ENCODE measurements at regions of chr16 and their contacts with region 1.

Region 1: GRCh38 chr16:3129137-3130131 is 5.4 kb upstream of the ZNF213 start:
- DNase-seq: peak; percentile 65
- CTCF ChIP-seq: peak; percentile 88

Region 2: DNA sequence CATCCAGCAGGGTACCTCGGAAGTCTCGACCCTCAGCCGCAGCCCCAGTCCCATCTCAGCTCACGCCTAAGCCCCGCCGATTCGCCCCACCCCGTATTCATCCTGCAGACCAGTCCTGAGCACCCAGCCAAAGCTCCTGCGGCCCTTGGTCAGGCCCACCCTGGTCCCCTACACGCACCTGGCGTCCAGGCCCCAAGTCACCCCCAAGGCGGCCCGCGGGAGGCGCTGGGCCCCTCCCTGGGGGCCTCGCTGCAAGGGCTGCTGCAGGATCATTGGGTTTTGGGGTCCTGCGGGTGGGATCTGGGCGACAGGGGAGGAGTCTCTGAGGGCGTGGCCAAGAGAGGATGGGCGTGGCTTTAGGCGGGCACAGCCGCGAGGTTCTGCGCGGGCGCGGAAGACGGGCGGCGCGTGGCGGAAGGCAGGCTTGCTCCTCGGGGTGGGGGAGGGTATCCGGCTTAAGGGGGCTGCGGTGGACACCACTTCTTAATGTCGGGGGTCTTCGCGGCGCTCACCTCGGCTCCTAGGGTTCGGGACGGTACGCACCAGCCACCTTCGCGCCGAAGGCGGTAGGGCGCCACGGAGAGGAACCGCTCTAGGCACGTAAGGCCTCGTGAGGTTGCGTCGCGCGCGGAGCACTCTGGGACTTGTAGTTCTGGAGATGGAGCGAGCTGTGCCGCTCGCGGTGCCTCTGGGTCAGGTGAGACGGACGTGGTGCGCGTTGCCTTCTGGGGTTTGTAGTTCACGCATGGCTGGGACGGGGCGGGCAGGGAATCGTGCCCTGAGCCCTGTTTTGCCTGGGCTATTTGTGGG is 105.6 kb before region 1 on chr16 and contains the starts of genes HCFC1R1 and THOC6:
- CTCF ChIA-PET with region 1: interaction called, 177 read pairs
- POLR2A ChIA-PET with region 1: no interaction called
- DNase-seq: peak; percentile 92
- CTCF ChIP-seq: no peak

Region 3: GRCh38 chr16:3065069-3065741 is 64.2 kb before region 1 on chr16 and contains the start of gene IL32:
- CTCF ChIA-PET with region 1: interaction called, 119 read pairs
- POLR2A ChIA-PET with region 1: no interaction called
- DNase-seq: peak; percentile 72
- CTCF ChIP-seq: no peak

Region 4: GRCh38 chr16:3094289-3095027 is 35.0 kb before region 1 on chr16:
- CTCF ChIA-PET with region 1: interaction called, 246 read pairs
- POLR2A ChIA-PET with region 1: no interaction called
- DNase-seq: peak; percentile 74
- CTCF ChIP-seq: peak; percentile 56

Region 5: DNA sequence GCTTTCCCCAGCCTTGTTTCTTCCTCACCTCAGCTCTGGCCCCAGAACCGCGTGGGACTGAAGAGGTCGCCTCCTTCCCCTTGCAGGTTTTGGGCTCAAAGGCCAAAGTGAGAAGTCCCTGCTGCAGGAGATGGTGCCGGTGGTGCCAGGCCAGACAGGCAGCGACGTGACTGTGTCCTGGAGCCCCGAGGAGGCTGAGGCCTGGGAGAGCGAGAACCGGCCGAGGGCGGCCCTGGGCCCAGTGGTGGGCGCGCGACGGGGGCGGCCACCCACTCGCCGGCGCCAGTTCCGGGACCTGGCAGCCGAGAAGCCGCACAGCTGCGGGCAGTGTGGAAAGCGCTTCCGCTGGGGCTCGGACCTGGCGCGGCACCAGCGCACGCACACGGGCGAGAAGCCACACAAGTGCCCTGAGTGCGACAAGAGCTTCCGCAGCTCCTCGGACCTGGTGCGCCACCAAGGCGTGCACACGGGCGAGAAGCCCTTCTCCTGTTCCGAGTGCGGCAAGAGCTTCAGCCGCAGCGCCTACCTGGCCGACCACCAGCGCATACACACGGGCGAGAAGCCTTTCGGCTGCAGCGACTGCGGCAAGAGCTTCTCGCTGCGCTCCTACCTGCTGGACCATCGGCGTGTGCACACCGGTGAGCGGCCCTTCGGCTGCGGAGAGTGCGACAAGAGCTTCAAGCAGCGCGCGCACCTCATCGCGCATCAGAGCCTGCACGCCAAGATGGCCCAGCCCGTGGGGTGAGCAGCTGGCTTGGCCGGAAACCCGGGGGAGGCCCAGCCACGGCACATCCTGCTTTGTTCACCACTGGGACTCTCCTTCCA is 11.4 kb after region 1 on chr16:
- CTCF ChIA-PET with region 1: interaction called, 189 read pairs
- POLR2A ChIA-PET with region 1: no interaction called
- DNase-seq: no peak
- CTCF ChIP-seq: no peak

Measured in GM10248 (cell line).